WTC11 (cell line): ENCODE measurements at regions of chr9 and their contacts with region 1.

Region 1: GRCh38 chr9:133485361-133486260 is 6.7 kb upstream of the SLC2A6 start:
- DNase-seq: no peak
- ATAC-seq: peak; percentile 30
- H3K4me3 Mint-ChIP-seq: no peak overlapping the region
- H3K27ac Mint-ChIP-seq: no peak overlapping the region
- H3K4me1 Mint-ChIP-seq: no peaks in the 10 kb centered on the region
- H3K27me3 Mint-ChIP-seq: peaks cover 4% of the 10 kb centered on the region
- CTCF ChIP-seq: no peak

Region 2: GRCh38 chr9:133356391-133357091 is 129.1 kb before region 1 on chr9 and contains the starts of genes SURF1 and SURF2:
- CTCF ChIA-PET with region 1: interaction called, 11 read pairs
- POLR2A ChIA-PET with region 1: no interaction called
- DNase-seq: peak; percentile 89
- ATAC-seq: peak; percentile 38
- H3K4me3 Mint-ChIP-seq: peak within 1 kb of the TSS; percentile 90
- H3K27ac Mint-ChIP-seq: no peak within 1 kb of the TSS; the same call in 1 of the 2 replicates
- H3K4me1 Mint-ChIP-seq: peaks cover 17% of the 10 kb centered on the region
- H3K27me3 Mint-ChIP-seq: no peaks in the 10 kb centered on the region
- CTCF ChIP-seq: no peak
- total RNA-seq, gene SURF1: 33.3 to 36.4 TPM (median 35.6 TPM) in 3 replicates
- total RNA-seq, gene SURF2: 26.3 to 33.3 TPM (median 28.8 TPM) in 3 replicates

Region 3: GRCh38 chr9:133522073-133523035 is 36.7 kb after region 1 on chr9:
- CTCF ChIA-PET with region 1: interaction called, 24 read pairs
- POLR2A ChIA-PET with region 1: no interaction called
- DNase-seq: no peak
- ATAC-seq: no peak
- H3K4me3 Mint-ChIP-seq: no peak overlapping the region
- H3K27ac Mint-ChIP-seq: no peak overlapping the region
- H3K4me1 Mint-ChIP-seq: peaks cover 20% of the 10 kb centered on the region
- H3K27me3 Mint-ChIP-seq: peaks cover 2% of the 10 kb centered on the region; the same call in 1 of the 2 replicates
- CTCF ChIP-seq: no peak

Region 4: DNA sequence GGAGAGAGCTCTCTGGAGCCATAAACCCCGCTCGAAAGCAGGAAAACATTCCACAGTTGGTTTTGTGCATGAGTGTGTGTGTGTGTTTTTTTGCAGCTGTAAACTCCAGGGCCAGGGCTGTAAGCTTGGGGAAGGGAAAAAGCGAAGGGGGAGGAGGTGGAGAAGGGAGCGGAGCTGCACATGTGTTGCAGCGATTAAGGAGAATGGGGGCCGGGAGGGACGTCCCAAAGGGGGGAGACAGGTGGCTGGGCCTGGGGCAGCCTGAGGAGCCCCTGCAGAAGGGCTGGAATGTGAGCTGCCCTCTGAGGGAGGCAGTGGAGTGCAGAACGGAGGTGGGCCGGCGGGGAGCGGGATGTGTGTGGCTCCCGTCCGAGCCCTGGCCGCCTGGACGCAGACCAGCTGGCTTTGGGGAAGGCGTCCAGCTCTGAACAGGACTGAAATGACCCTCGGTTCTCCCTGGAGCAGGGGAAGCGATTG is 41.9 kb after region 1 on chr9:
- CTCF ChIA-PET with region 1: interaction called, 24 read pairs
- POLR2A ChIA-PET with region 1: no interaction called
- DNase-seq: peak; percentile 30
- ATAC-seq: no peak; the same call in 1 of the 2 replicates
- H3K4me3 Mint-ChIP-seq: peak overlapping the region; percentile 34; the same call in 1 of the 2 replicates
- H3K27ac Mint-ChIP-seq: 0 out of 2 replicates have a peak overlapping the region, but pooled peaks have one; percentile 3
- H3K4me1 Mint-ChIP-seq: peaks cover 33% of the 10 kb centered on the region
- H3K27me3 Mint-ChIP-seq: peaks cover 2% of the 10 kb centered on the region; the same call in 1 of the 2 replicates
- CTCF ChIP-seq: no peak